Activated B cell treated with CpG ODN at 0.5 μM for 24 hours (primary cell): ENCODE measurements at regions of chr6 and their contacts with region 1.

Region 1: DNA sequence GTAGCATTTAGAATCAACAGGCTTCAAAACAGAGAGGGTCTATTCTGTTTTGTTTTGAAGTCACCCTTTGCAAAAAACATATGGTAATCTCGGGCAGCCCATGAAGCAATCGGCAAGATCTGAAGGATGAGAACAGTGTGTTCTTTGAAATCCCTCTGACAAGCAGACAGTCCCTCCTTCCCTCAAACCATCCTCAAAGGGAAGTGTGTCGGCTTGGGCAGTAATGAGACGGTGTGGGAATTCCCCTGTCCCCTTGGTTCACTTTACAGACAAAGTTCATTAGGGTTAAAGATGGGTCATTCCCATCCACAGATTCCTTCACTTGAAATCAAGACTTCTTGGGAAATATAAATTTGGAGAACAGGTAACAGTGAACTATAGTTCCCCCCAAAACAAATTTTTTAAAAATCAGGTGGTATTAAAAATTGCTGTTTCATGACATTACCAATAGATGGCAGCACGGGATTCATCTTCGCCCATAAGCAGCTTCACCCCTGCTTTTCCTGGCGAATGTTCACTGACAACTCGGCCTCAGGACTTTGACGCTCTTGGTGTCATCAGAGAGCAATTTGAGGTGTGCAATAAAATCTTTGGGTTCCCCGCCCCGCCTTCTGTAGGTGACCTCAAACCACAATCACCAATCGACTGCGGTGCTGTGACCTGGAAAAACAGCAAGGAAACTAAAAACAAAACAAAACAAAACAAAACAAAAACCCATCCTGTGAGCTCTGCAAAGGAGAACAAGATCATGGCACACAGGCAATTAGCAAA is 159.3 kb upstream of the TNFAIP3 start:
- DNase-seq: peak; percentile 27
- ATAC-seq: peak; percentile 75
- H3K4me3 Mint-ChIP-seq: peak overlapping the region; percentile 57
- H3K27ac Mint-ChIP-seq: peak overlapping the region; percentile 85
- H3K4me1 Mint-ChIP-seq: peaks cover 59% of the 10 kb centered on the region
- H3K27me3 Mint-ChIP-seq: no peaks in the 10 kb centered on the region
- CTCF ChIP-seq: peak; percentile 38

Region 2: GRCh38 chr6:137661601-137662000 is 46.2 kb before region 1 on chr6:
- CTCF ChIA-PET with region 1: no interaction called
- POLR2A ChIA-PET with region 1: no interaction called
- intact Hi-C with region 1: loop called (anchors 1 kb)
- DNase-seq: no peak
- ATAC-seq: peak; percentile 56
- H3K4me3 Mint-ChIP-seq: no peak overlapping the region
- H3K27ac Mint-ChIP-seq: no peak overlapping the region
- H3K4me1 Mint-ChIP-seq: no peaks in the 10 kb centered on the region
- H3K27me3 Mint-ChIP-seq: peaks cover 7% of the 10 kb centered on the region
- CTCF ChIP-seq: no peak

Region 3: DNA sequence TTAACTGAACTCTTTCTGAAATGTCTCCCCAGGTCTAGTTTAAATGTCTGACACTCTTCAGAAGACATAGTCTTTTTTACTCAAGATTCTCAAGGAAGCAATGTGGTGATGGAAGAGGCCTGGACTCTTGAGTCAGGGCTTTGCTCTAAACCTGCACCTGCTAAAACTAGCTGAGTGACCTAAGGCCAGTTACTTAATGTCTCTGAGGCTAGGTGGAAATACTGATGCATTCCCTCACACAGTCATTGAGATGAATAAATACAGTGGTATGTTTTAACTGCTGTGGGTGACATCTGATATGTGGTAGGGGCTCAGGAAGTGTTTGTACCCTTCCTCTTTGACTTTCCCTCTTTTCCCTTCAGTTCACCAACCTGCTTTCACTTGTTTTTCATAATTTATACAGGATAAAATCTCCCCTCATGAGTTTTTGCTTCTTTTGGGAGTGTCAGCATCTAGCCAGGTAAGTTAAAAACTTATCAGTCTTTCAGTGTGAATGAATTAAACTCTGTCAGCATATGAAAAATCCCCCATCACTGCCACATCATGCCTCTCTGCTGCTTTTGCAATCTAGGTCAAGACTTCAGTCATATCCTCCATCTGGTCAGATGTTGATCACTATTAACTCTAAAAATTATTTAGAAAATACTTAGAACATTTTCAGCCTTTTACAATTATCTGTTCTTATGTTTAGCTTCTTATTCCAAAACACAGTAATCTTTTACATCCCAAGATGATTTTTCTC is 19.4 kb before region 1 on chr6:
- CTCF ChIA-PET with region 1: no interaction called
- POLR2A ChIA-PET with region 1: no interaction called
- intact Hi-C with region 1: no loop called
- DNase-seq: no peak
- ATAC-seq: no peak
- H3K4me3 Mint-ChIP-seq: no peak overlapping the region
- H3K27ac Mint-ChIP-seq: no peak overlapping the region
- H3K4me1 Mint-ChIP-seq: no peaks in the 10 kb centered on the region
- H3K27me3 Mint-ChIP-seq: peaks cover 4% of the 10 kb centered on the region
- CTCF ChIP-seq: no peak

Region 4: GRCh38 chr6:137761103-137761886 is 53.5 kb after region 1 on chr6:
- CTCF ChIA-PET with region 1: no interaction called
- POLR2A ChIA-PET with region 1: no interaction called
- intact Hi-C with region 1: no loop called
- DNase-seq: no peak
- ATAC-seq: no peak
- H3K4me3 Mint-ChIP-seq: no peak overlapping the region
- H3K27ac Mint-ChIP-seq: no peak overlapping the region
- H3K4me1 Mint-ChIP-seq: peaks cover 9% of the 10 kb centered on the region
- H3K27me3 Mint-ChIP-seq: no peaks in the 10 kb centered on the region
- CTCF ChIP-seq: no peak

Region 5: DNA sequence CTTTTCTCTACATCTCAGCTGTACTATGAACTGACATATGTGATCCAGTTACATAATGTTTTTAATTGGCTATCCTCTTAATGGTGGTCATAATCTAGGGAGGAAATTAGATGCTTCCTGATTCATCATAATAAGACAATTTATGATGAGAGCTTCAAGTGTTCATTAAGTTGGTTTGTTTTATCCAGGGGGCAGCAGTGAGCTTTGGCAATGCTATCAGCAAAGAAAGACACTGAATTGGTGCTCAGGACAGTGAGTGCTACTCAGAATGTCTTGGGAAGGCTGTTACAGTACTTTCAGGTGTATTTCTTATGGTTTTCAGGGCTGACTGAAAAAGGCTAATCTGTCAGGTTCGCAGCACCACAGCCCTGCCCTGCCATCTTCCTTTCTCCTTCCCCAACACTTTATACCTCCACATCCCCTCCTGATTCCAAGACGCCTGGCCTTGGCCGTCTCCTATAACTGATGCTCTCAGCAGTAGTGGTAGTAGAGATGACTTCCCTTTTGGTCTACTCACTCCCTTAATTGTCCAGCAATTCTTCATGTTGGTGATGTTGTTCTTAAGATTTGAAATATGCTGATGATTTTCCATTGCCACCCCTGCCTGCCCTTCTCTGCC is 92.3 kb after region 1 on chr6:
- CTCF ChIA-PET with region 1: interaction called, 11 read pairs
- POLR2A ChIA-PET with region 1: interaction called, 8 read pairs
- intact Hi-C with region 1: loop called (anchors 1 kb)
- DNase-seq: no peak
- ATAC-seq: peak; percentile 91
- H3K4me3 Mint-ChIP-seq: no peak overlapping the region
- H3K27ac Mint-ChIP-seq: peak overlapping the region; percentile 65
- H3K4me1 Mint-ChIP-seq: peaks cover 29% of the 10 kb centered on the region
- H3K27me3 Mint-ChIP-seq: no peaks in the 10 kb centered on the region
- CTCF ChIP-seq: no peak

Region 6: GRCh38 chr6:137938770-137939379 is 231.1 kb after region 1 on chr6:
- CTCF ChIA-PET with region 1: interaction called, 39 read pairs
- POLR2A ChIA-PET with region 1: interaction called, 4 read pairs
- intact Hi-C with region 1: loop called (anchors 1 kb)
- DNase-seq: no peak
- ATAC-seq: no peak
- H3K4me3 Mint-ChIP-seq: no peak overlapping the region
- H3K27ac Mint-ChIP-seq: no peak overlapping the region
- H3K4me1 Mint-ChIP-seq: peaks cover 18% of the 10 kb centered on the region
- H3K27me3 Mint-ChIP-seq: no peaks in the 10 kb centered on the region
- CTCF ChIP-seq: no peak

Region 7: GRCh38 chr6:138001750-138002349 is 294.1 kb after region 1 on chr6:
- CTCF ChIA-PET with region 1: interaction called, 14 read pairs
- POLR2A ChIA-PET with region 1: no interaction called
- intact Hi-C with region 1: loop called (anchors 1 kb)
- DNase-seq: no peak
- ATAC-seq: peak; percentile 57
- H3K4me3 Mint-ChIP-seq: no peak overlapping the region
- H3K27ac Mint-ChIP-seq: no peak overlapping the region
- H3K4me1 Mint-ChIP-seq: peaks cover 3% of the 10 kb centered on the region
- H3K27me3 Mint-ChIP-seq: peaks cover 5% of the 10 kb centered on the region
- CTCF ChIP-seq: peak; percentile 98